Caco-2 (cell line): ENCODE measurements at regions of chr3 and their contacts with region 1.

Region 1: GRCh38 chr3:177359593-177360357 is 162.5 kb upstream of the TBL1XR1 start:
- DNase-seq: peak; percentile 94 to 97
- H3K4me3 ChIP-seq: peak overlapping the region; percentile 39
- H3K4me3 Mint-ChIP-seq: peak overlapping the region; percentile 77
- H3K27ac Mint-ChIP-seq: peak overlapping the region; percentile 89
- H3K4me1 ChIP-seq: peaks cover 39% of the 10 kb centered on the region
- H3K4me1 Mint-ChIP-seq: peaks cover 45% of the 10 kb centered on the region
- H3K27me3 ChIP-seq: no peaks in the 10 kb centered on the region
- H3K27me3 Mint-ChIP-seq: no peaks in the 10 kb centered on the region
- CTCF ChIP-seq: no peak

Region 2: GRCh38 chr3:177197041-177197727 is 162.6 kb before region 1 on chr3 and contains the start of gene TBL1XR1:
- CTCF ChIA-PET with region 1: interaction called, 8 read pairs
- POLR2A ChIA-PET with region 1: interaction called, 23 read pairs
- intact Hi-C with region 1: loop called (anchors 1 kb)
- DNase-seq: peak; percentile 90 to 92
- H3K4me3 ChIP-seq: peak within 1 kb of the TSS; percentile 70
- H3K4me3 Mint-ChIP-seq: peak within 1 kb of the TSS; percentile 95
- H3K27ac Mint-ChIP-seq: peak within 1 kb of the TSS; percentile 95
- H3K4me1 ChIP-seq: peaks cover 18% of the 10 kb centered on the region
- H3K4me1 Mint-ChIP-seq: peaks cover 17% of the 10 kb centered on the region
- H3K27me3 ChIP-seq: no peaks in the 10 kb centered on the region
- H3K27me3 Mint-ChIP-seq: no peaks in the 10 kb centered on the region
- CTCF ChIP-seq: no peak
- total RNA-seq, gene TBL1XR1: 127 and 140 TPM in 2 replicates

Region 3: GRCh38 chr3:177295116-177295515 is 64.7 kb before region 1 on chr3:
- CTCF ChIA-PET with region 1: no interaction called
- POLR2A ChIA-PET with region 1: interaction called, 11 read pairs
- intact Hi-C with region 1: loop called (anchors 1 kb)
- DNase-seq: peak; percentile 75 to 91
- H3K4me3 ChIP-seq: no peak overlapping the region
- H3K4me3 Mint-ChIP-seq: peak overlapping the region; percentile 37
- H3K27ac Mint-ChIP-seq: peak overlapping the region; percentile 78
- H3K4me1 ChIP-seq: peaks cover 34% of the 10 kb centered on the region
- H3K4me1 Mint-ChIP-seq: peaks cover 7% of the 10 kb centered on the region
- H3K27me3 ChIP-seq: no peaks in the 10 kb centered on the region
- H3K27me3 Mint-ChIP-seq: no peaks in the 10 kb centered on the region
- CTCF ChIP-seq: no peak

Region 4: DNA sequence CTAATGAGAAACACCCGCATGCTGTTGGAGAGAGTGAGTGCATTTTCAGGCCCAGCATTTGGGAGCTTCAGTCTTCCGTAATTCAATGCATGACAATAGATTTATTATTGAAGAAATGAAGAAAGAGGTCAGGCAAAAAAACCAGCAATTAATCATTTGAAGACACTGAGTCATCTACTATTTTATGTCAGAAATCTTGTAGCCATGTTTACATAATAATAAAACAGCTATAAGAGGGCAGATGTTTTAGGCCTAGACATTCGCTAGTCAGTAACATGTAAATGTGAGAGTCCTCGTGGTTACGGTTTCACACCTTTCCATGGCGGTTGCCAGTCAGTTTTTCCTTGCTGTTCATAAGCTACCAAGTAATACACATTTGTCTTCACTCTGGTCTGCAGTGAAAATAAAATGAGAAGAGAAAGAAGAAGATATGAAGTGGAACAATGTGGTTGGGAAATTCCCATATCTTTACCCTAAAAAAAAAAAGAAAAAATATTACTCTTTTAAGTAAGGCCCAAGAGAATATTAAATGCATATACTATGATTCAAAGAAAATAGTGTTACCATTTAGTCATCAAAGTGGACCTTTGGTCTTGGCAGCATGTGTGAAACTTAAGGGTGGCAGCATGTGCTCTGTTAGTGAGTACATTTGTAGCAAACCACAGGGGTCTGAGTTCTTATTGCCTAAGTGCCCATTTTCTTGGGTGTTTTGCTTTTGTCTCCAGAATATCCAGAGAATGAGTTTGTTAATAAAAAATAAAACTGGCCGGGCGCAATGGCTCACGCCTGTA is 22.0 kb before region 1 on chr3:
- CTCF ChIA-PET with region 1: interaction called, 4 read pairs
- POLR2A ChIA-PET with region 1: interaction called, 5 read pairs
- intact Hi-C with region 1: loop called (anchors 1 kb)
- DNase-seq: no peak
- H3K4me3 ChIP-seq: no peak overlapping the region
- H3K4me3 Mint-ChIP-seq: peak overlapping the region; percentile 33
- H3K27ac Mint-ChIP-seq: peak overlapping the region; percentile 53
- H3K4me1 ChIP-seq: peaks cover 36% of the 10 kb centered on the region
- H3K4me1 Mint-ChIP-seq: peaks cover 14% of the 10 kb centered on the region
- H3K27me3 ChIP-seq: no peaks in the 10 kb centered on the region
- H3K27me3 Mint-ChIP-seq: no peaks in the 10 kb centered on the region
- CTCF ChIP-seq: no peak

Region 5: GRCh38 chr3:177673112-177673914 is 313.5 kb after region 1 on chr3:
- CTCF ChIA-PET with region 1: no interaction called
- POLR2A ChIA-PET with region 1: no interaction called
- intact Hi-C with region 1: loop called (anchors 2 kb)
- DNase-seq: peak in 1 of 2 experiments; percentile 8
- H3K4me3 ChIP-seq: no peak overlapping the region
- H3K4me3 Mint-ChIP-seq: peak overlapping the region; percentile 46
- H3K27ac Mint-ChIP-seq: peak overlapping the region; percentile 57
- H3K4me1 ChIP-seq: peaks cover 51% of the 10 kb centered on the region
- H3K4me1 Mint-ChIP-seq: peaks cover 30% of the 10 kb centered on the region
- H3K27me3 ChIP-seq: no peaks in the 10 kb centered on the region
- H3K27me3 Mint-ChIP-seq: no peaks in the 10 kb centered on the region
- CTCF ChIP-seq: no peak

Region 6: DNA sequence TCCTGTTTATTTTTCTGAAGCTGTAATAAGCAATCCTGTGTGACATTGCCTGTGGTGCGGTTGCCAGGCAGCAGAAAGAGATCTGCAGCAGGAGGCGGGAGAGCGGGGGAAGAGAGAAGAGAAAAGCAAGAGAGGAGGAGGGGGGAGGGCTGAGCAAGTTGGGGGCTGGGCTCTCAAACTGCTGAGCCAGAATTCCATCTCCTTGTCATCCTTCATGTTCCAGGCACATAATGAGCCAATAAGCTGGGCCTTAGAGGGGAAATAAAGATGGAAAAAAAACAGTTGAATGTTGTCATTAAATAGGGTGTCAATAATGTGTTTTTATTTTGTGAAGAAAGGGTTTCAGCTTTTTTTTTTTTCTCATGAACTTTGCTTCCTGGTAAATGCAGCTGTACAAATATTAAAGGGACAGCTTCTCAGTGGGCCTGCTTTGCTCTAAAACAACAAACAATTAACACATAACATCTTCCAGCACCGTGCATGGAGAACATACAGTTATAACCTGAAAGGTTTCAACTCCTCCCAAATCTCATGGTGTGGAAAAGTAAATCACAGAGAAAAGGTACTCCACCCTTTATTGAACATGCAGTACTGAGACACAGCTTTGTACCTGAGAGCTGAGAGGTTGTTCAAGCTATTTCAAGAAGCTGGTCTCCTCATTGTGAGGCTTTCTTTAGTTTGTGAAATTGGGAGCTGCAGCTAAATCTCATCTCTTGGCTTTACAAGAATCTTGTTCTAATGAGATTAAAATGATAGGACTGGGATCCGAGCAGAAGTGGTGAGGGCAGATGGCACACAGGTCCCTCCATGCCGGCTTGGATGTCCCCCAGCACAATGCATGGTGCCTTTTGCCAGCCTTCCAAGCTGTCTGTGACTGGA is 725.4 kb after region 1 on chr3:
- CTCF ChIA-PET with region 1: no interaction called
- POLR2A ChIA-PET with region 1: no interaction called
- intact Hi-C with region 1: no loop called
- DNase-seq: peak; percentile 40 to 56
- H3K4me3 ChIP-seq: no peak overlapping the region
- H3K4me3 Mint-ChIP-seq: peak overlapping the region; percentile 10
- H3K27ac Mint-ChIP-seq: no peak overlapping the region
- H3K4me1 ChIP-seq: peaks cover 26% of the 10 kb centered on the region
- H3K4me1 Mint-ChIP-seq: peaks cover 18% of the 10 kb centered on the region
- H3K27me3 ChIP-seq: no peaks in the 10 kb centered on the region
- H3K27me3 Mint-ChIP-seq: no peaks in the 10 kb centered on the region
- CTCF ChIP-seq: no peak